Sigmoid colon (tissue), 7 donors: ENCODE measurements at regions of chr14 and their contacts with region 1.

Region 1: DNA sequence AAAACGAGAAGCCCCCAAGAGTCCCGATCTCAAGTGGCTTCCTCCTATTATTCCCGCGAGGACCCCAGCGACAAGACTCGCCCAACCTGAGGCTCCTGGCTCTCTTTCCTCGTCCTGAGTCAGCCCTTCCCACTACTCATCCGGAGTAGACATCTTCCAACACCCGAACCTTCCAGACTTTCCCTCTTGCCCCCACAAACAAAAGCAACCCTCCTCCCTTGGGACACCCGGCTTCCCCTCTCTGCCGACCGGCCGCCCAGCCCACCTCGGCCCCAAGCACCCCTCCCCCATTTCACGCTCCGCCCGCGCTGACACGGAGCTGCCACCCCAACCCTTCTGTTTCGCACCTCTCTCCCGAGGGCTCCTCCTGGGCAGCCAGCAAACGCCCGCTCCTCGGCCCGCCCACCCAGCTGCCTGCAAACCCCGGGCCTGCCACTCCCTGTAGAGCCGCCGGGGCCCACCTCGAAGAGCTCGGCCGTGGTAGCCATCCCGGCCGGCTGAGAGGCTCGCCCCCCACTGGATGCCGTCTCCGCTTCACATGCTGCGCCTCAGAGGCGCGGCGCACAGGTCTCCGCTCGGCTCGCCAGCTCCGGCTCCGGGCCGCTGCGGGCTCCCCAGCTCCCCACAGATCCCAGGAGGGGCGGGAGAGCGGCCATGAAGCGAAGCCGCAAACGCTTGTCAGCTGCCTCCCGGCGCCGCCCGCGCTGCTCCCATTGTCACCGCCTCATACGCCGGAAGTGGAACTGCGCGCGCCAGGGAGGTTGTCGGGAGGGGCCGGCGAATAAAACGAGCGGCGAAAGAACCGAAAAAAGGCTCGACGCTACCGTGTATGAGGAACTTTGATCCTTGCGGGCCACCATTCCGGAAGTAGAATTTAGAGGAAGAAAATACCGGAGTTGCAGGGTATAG is at the starts of genes AP5M1 and EXOC5:
- DNase-seq: peak; percentile 94
- H3K4me3 ChIP-seq: peak within 1 kb of the TSS; percentile 68 to 90 (median 80)
- H3K27ac ChIP-seq: peak within 1 kb of the TSS; percentile 90 to 98 (median 96)
- H3K4me1 ChIP-seq: peaks cover 0 to 56% (median 30%) of the 10 kb centered on the region in 4 donors
- H3K27me3 ChIP-seq: no peaks in the 10 kb centered on the region
- CTCF ChIP-seq: peak in 1 of 4 experiments; percentile 11
- EP300 ChIP-seq: no peak
- POLR2A ChIP-seq: peak; percentile 14 to 48
- total RNA-seq, gene AP5M1: 16.1 to 24.9 (median 20.6) TPM
- total RNA-seq, gene EXOC5: 48.2 to 61.4 (median 52.3) TPM

Region 2: DNA sequence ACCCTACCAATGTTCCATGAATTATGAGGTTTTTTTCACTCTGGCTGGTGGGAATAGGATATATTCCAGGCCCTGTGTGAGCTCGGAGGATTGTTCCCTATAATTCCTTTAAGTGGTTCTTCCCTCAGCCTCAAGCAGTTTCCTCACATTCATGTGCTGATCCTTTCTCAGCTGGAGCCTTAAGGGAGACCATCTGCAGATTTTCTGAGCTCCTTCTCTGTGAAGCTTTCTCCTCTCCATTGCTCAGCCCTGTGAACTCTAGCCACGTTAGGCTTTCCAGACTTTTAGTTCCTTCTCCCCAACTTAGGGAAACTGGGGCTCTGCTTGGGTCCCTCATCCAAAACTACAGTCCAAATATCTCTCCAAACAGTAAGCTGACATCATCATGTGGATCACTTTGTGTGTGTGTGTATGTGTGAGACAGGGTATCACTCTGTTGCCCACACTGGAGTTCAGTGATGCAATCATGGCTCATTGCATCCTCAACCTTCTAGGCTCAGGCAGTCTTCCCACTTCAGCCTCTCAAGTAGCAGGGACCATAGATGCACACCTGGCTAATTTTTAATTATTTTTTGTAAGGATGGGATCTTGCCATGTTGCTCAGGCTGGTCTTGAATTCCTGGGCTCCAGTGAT is 238.7 kb before region 1 on chr14:
- intact Hi-C with region 1: no loop called
- DNase-seq: no peak
- H3K4me3 ChIP-seq: no peak overlapping the region
- H3K27ac ChIP-seq: no peak overlapping the region
- H3K4me1 ChIP-seq: no peaks in the 10 kb centered on the region
- H3K27me3 ChIP-seq: no peaks in the 10 kb centered on the region
- CTCF ChIP-seq: no peak
- EP300 ChIP-seq: no peak
- POLR2A ChIP-seq: no peak

Region 3: GRCh38 chr14:57390028-57390805 is 121.8 kb after region 1 on chr14 and contains the start of gene NAA30:
- intact Hi-C with region 1: loop called (anchors 2 kb)
- DNase-seq: peak; percentile 94
- H3K4me3 ChIP-seq: peak within 1 kb of the TSS; percentile 67 to 95 (median 90)
- H3K27ac ChIP-seq: peak within 1 kb of the TSS; percentile 87 to 94 (median 88)
- H3K4me1 ChIP-seq: peaks cover 0 to 42% (median 28%) of the 10 kb centered on the region in 4 donors
- H3K27me3 ChIP-seq: no peaks in the 10 kb centered on the region
- CTCF ChIP-seq: no peak
- EP300 ChIP-seq: no peak
- POLR2A ChIP-seq: peak in 1 of 2 donors; percentile 37
- total RNA-seq, gene NAA30: 19.6 to 21.7 (median 21.0) TPM